Breast epithelium (tissue), 4 donors: ENCODE measurements at regions of chr10 and their contacts with region 1.

Region 1: DNA sequence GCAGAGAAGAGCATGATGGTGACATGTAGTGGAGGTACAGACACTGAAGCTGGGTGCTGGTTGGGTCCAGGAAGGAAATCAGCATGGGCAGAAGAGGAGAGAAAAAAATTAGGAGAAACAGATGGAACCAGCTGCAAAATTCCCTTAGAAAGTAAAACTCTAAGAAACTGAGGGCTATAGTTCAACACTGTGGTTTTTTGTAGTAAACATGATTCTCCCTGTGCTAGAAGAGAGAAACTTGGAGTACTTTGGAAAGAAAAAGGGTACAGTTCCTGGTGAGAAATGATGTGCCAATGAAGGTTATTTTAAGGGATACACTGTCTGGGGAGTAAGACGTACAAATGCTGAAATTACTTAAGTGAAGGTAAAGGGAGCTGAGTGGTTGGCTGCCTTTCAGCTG is 181.5 kb upstream of the HPS1 start:
- DNase-seq: no peak
- H3K4me3 ChIP-seq: no peak overlapping the region
- H3K27ac ChIP-seq: no peak overlapping the region
- H3K4me1 ChIP-seq: no peaks in the 10 kb centered on the region
- H3K27me3 ChIP-seq: no peaks in the 10 kb centered on the region
- CTCF ChIP-seq: no peak
- POLR2A ChIP-seq: no peak

Region 2: DNA sequence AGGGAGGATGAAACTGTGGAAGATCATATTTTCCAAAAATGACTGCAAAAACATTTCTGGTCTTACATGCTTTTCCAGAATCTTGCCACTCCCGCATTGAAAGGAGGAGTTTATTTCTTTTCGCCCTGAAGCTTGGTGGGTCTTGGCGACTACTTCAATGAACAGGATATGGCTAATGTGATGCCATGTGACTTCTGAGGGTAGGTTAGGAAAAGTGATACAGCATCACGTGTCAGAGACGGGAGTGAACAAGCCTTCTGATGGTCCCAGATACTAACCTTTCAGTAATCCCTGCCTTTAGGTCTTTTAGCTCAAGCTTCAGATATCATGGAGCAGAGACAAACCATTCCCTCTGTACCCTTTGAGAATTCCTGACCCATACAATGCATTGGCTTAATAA is 10.7 kb after region 1 on chr10:
- intact Hi-C with region 1: loop called (anchors 1 kb)
- DNase-seq: no peak
- H3K4me3 ChIP-seq: no peak overlapping the region
- H3K27ac ChIP-seq: no peak overlapping the region
- H3K4me1 ChIP-seq: no peaks in the 10 kb centered on the region
- H3K27me3 ChIP-seq: no peaks in the 10 kb centered on the region
- CTCF ChIP-seq: no peak
- POLR2A ChIP-seq: no peak